MCF 10A (cell line): ENCODE measurements at regions of chr7 and their contacts with region 1.

Region 1: DNA sequence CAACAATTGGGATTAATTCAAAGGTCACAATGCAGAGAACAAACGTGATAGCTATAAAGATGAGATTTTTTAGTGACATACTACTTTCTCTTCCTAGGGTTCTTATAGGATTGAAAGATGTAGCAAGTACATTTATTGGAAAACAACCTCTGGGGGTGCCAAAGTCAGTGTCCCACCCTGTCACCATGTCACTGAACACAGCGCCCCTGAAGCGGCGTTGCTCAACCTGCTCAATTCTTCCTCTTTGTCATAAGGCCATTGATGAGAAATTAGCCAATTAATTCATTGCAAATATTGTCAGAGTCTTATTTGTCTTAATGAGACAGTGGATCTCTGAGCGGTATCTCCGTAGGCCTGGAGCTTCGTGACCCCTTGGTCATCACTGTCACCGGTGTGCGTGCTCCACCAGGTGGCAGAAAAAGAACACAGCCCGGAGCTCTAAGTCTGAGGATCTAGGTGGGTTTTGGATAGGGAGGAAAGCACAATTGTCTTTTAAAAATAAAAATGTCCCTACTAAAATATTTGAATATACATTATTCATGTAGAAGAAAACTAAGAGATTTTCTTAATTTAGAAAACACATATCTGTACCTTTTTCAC is 362.6 kb downstream of the PAXIP1 start:
- DNase-seq: no peak
- H3K4me3 Mint-ChIP-seq: no peak overlapping the region
- H3K27ac Mint-ChIP-seq: no peak overlapping the region
- H3K4me1 Mint-ChIP-seq: no peaks in the 10 kb centered on the region
- H3K27me3 Mint-ChIP-seq: no peaks in the 10 kb centered on the region
- CTCF ChIP-seq: no peak

Region 2: DNA sequence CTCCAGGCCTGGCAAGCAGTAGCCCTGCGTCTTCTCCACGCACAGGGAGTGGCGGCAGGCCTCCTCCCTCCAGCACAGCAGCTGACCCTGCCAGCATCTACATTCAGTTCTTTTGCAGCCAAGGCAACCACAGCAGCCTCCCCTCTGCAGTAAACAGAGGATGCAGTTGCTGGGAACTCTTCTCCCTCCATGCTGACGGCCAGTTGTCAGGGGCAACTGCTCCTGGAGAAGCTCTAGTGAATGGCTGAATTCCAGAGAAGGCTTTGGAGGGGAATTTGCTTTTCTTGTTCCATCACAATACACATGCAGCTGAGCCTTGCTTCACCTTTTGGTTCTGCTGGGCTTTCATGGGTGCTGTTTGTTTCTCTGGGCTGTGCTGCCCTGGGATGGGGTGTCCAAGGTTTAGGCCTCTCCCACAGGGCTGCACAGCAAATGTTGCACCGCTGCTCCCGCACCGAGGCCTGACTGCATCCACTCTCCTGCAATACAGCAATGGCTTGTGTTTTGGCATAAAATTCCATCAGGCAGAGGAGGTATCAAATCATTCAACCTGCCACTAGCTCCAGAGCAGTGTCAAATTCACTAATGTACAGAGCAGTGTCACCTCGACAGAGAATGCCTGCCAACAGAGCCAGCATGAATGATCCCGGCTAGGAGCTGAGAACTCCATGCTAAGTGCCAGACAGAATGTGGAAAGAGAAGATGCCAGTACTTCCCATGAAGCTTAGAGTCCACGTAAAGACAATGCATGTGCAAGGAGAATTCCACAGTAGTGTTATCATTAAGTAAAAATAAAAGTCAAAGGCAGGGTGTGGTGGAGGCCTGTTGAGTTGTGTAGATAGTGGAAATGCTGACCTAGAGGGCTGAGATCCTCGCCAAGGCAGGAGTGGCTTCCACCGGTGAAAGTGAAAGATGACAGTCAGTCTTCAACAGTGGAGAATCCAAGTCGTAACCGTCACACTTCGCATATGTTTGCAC is 188.6 kb before region 1 on chr7:
- CTCF ChIA-PET with region 1: no interaction called
- POLR2A ChIA-PET with region 1: no interaction called
- intact Hi-C with region 1: no loop called
- DNase-seq: no peak
- H3K4me3 Mint-ChIP-seq: no peak overlapping the region
- H3K27ac Mint-ChIP-seq: no peak overlapping the region
- H3K4me1 Mint-ChIP-seq: no peaks in the 10 kb centered on the region
- H3K27me3 Mint-ChIP-seq: no peaks in the 10 kb centered on the region
- CTCF ChIP-seq: no peak

Region 3: DNA sequence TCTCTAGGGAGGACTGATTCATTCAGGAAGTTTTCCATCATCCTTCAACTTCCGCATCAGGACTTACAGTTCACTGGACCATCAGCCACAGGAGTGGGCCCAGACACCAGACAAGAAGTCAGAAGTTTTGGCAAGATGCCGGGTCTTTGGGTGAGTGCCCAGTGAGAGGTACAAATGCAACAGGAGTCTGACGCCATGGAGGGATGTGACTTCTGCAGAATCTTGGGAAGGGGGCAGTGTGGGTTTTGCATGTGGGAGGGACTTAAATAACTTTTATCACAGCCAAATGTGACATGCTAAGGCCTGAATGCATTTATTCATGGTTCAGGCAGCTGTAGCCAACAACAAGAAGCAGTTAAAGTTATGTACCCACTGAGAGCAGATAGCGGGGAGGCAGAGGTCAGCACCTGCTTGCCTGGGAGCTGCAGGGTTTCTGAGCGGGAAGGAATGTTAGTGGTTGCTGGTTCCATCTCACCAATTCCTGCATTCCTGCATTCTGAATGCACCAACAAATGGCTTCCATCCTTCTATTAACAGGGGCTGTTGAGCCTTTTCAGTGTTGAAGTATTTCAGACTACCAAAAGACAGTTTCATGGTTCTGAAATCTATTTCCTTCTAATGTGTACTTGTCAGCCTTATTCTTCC is 12.6 kb before region 1 on chr7:
- CTCF ChIA-PET with region 1: interaction called, 14 read pairs
- POLR2A ChIA-PET with region 1: no interaction called
- intact Hi-C with region 1: no loop called
- DNase-seq: no peak
- H3K4me3 Mint-ChIP-seq: no peak overlapping the region
- H3K27ac Mint-ChIP-seq: no peak overlapping the region
- H3K4me1 Mint-ChIP-seq: no peaks in the 10 kb centered on the region
- H3K27me3 Mint-ChIP-seq: no peaks in the 10 kb centered on the region
- CTCF ChIP-seq: no peak

Region 4: GRCh38 chr7:154672659-154673415 is 32.5 kb after region 1 on chr7:
- CTCF ChIA-PET with region 1: interaction called, 14 read pairs
- POLR2A ChIA-PET with region 1: no interaction called
- intact Hi-C with region 1: no loop called
- DNase-seq: no peak
- H3K4me3 Mint-ChIP-seq: no peak overlapping the region
- H3K27ac Mint-ChIP-seq: no peak overlapping the region
- H3K4me1 Mint-ChIP-seq: no peaks in the 10 kb centered on the region
- H3K27me3 Mint-ChIP-seq: no peaks in the 10 kb centered on the region
- CTCF ChIP-seq: no peak

Region 5: GRCh38 chr7:154744256-154744860 is 104.0 kb after region 1 on chr7:
- CTCF ChIA-PET with region 1: interaction called, 40 read pairs
- POLR2A ChIA-PET with region 1: no interaction called
- intact Hi-C with region 1: loop called (anchors 2 kb)
- DNase-seq: peak; percentile 0
- H3K4me3 Mint-ChIP-seq: no peak overlapping the region
- H3K27ac Mint-ChIP-seq: no peak overlapping the region
- H3K4me1 Mint-ChIP-seq: no peaks in the 10 kb centered on the region
- H3K27me3 Mint-ChIP-seq: no peaks in the 10 kb centered on the region
- CTCF ChIP-seq: peak; percentile 49

Region 6: GRCh38 chr7:154903083-154903731 is 262.8 kb after region 1 on chr7:
- CTCF ChIA-PET with region 1: no interaction called
- POLR2A ChIA-PET with region 1: no interaction called
- intact Hi-C with region 1: no loop called
- DNase-seq: no peak
- H3K4me3 Mint-ChIP-seq: no peak overlapping the region
- H3K27ac Mint-ChIP-seq: no peak overlapping the region
- H3K4me1 Mint-ChIP-seq: no peaks in the 10 kb centered on the region
- H3K27me3 Mint-ChIP-seq: no peaks in the 10 kb centered on the region
- CTCF ChIP-seq: no peak